ENCODE measurements at regions of chr5 and their contacts with region 1.

Region 1: GRCh38 chr5:136769900-136770684 is 404.7 kb upstream of the TRPC7 start:
- DNase-seq: peak; percentile 50
- ATAC-seq: peak; percentile 97
- H3K4me3 ChIP-seq: no peak overlapping the region
- H3K27ac ChIP-seq: no peak overlapping the region
- H3K4me1 ChIP-seq: no peaks in the 10 kb centered on the region
- H3K27me3 ChIP-seq: no peaks in the 10 kb centered on the region
- CTCF ChIP-seq: peak; percentile 79
- POLR2A ChIP-seq: no peak
- RAD21 ChIP-seq: peak; percentile 92

Region 2: GRCh38 chr5:136364307-136364706 is 405.8 kb before region 1 on chr5:
- CTCF ChIA-PET with region 1: interaction called, 5 read pairs
- POLR2A ChIA-PET with region 1: no interaction called
- dilution Hi-C with region 1: no loop called
- in situ Hi-C with region 1: no loop called
- intact Hi-C with region 1: loop called (anchors 1 kb)
- DNase-seq: no peak
- ATAC-seq: no peak
- H3K4me3 ChIP-seq: no peak overlapping the region
- H3K27ac ChIP-seq: no peak overlapping the region
- H3K4me1 ChIP-seq: no peaks in the 10 kb centered on the region
- H3K27me3 ChIP-seq: no peaks in the 10 kb centered on the region
- CTCF ChIP-seq: peak; percentile 29
- POLR2A ChIP-seq: no peak
- RAD21 ChIP-seq: no peak

Region 3: DNA sequence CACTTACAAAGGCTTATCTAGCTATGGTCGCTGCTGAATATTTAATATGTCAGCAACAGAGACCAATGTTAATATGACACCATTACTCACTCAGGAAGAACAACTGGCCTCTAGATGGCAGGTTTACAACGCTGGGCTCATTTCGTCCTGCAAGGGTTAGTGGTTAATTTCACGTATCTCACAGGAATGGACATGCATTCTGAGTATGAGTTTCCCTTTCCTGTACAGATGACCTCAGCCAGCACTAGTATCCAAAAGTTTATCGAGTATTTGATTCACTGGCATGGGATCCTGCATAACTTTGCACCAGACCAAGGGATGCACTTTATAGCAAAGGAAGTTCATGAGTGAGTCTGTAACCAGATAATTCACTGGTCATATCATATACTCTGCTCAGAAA is 396.1 kb before region 1 on chr5:
- CTCF ChIA-PET with region 1: no interaction called
- POLR2A ChIA-PET with region 1: no interaction called
- dilution Hi-C with region 1: no loop called
- in situ Hi-C with region 1: no loop called
- intact Hi-C with region 1: loop called (anchors 1 kb)
- DNase-seq: peak; percentile 12
- ATAC-seq: peak; percentile 32
- H3K4me3 ChIP-seq: no peak overlapping the region
- H3K27ac ChIP-seq: no peak overlapping the region
- H3K4me1 ChIP-seq: no peaks in the 10 kb centered on the region
- H3K27me3 ChIP-seq: no peaks in the 10 kb centered on the region
- CTCF ChIP-seq: peak; percentile 34; the same call in 1 of the 2 replicates
- POLR2A ChIP-seq: no peak
- RAD21 ChIP-seq: peak; percentile 31; the same call in 1 of the 2 replicates

Region 4: GRCh38 chr5:136424835-136425584 is 345.1 kb before region 1 on chr5:
- CTCF ChIA-PET with region 1: no interaction called
- POLR2A ChIA-PET with region 1: no interaction called
- dilution Hi-C with region 1: no loop called
- in situ Hi-C with region 1: no loop called
- intact Hi-C with region 1: loop called (anchors 1 kb)
- DNase-seq: peak; percentile 33
- ATAC-seq: peak; percentile 61; the same call in 1 of the 2 replicates
- H3K4me3 ChIP-seq: no peak overlapping the region
- H3K27ac ChIP-seq: no peak overlapping the region
- H3K4me1 ChIP-seq: no peaks in the 10 kb centered on the region
- H3K27me3 ChIP-seq: no peaks in the 10 kb centered on the region
- CTCF ChIP-seq: peak; percentile 61
- POLR2A ChIP-seq: no peak
- RAD21 ChIP-seq: peak; percentile 58

Region 5: DNA sequence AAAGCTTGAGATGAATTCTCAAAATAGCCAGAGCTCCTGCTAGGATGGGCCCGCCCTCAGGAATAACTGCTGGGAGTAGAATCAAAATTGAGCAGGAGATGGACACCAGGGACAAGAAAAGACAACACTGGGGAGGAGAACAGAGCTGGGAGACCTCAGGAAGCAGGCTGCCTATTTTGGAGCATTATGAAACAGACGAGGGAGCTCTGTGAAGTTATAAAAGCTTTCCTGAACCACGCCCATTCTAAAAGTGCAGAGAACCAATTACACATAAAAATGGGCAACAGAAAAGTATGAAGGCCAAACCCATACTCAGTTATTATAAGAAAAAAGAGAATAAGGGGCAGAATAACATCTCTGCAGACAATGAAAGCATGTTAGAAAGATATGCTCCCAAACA is 190.9 kb before region 1 on chr5:
- CTCF ChIA-PET with region 1: no interaction called
- POLR2A ChIA-PET with region 1: no interaction called
- dilution Hi-C with region 1: no loop called
- in situ Hi-C with region 1: no loop called
- intact Hi-C with region 1: no loop called
- DNase-seq: no peak
- ATAC-seq: no peak
- H3K4me3 ChIP-seq: no peak overlapping the region
- H3K27ac ChIP-seq: no peak overlapping the region
- H3K4me1 ChIP-seq: no peaks in the 10 kb centered on the region
- H3K27me3 ChIP-seq: no peaks in the 10 kb centered on the region
- CTCF ChIP-seq: no peak
- POLR2A ChIP-seq: no peak
- RAD21 ChIP-seq: no peak

Region 6: DNA sequence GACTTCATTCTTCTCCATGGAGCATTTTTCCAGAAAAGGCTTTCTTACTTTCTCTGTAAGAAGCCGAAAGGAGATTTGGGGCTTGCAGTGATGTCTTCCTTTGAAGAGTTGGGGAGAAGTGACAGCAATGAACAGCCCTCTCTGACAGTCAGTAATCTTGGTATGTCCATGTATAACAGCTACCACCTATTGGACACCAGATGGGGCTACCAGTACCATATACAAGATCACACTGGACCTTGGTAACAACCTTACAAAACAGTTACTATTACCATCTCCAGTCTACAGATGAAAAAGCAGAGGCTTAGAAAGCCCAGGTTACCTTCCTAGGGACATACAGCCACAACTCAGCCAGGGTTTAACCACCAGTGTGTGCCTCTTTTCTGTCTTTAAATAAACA is 132.0 kb before region 1 on chr5:
- CTCF ChIA-PET with region 1: no interaction called
- POLR2A ChIA-PET with region 1: no interaction called
- dilution Hi-C with region 1: no loop called
- in situ Hi-C with region 1: no loop called
- intact Hi-C with region 1: loop called (anchors 1 kb)
- DNase-seq: no peak
- ATAC-seq: peak; percentile 42; the same call in 1 of the 2 replicates
- H3K4me3 ChIP-seq: no peak overlapping the region
- H3K27ac ChIP-seq: no peak overlapping the region
- H3K4me1 ChIP-seq: no peaks in the 10 kb centered on the region
- H3K27me3 ChIP-seq: no peaks in the 10 kb centered on the region
- CTCF ChIP-seq: 0 out of 2 replicates have a peak, but pooled peaks have one; percentile 16
- POLR2A ChIP-seq: no peak
- RAD21 ChIP-seq: peak; percentile 29; the same call in 1 of the 2 replicates

Region 7: GRCh38 chr5:136686192-136686872 is 83.8 kb before region 1 on chr5:
- CTCF ChIA-PET with region 1: no interaction called
- POLR2A ChIA-PET with region 1: no interaction called
- dilution Hi-C with region 1: no loop called
- in situ Hi-C with region 1: no loop called
- intact Hi-C with region 1: loop called (anchors 5 kb)
- DNase-seq: peak; percentile 26
- ATAC-seq: peak; percentile 71
- H3K4me3 ChIP-seq: no peak overlapping the region
- H3K27ac ChIP-seq: no peak overlapping the region
- H3K4me1 ChIP-seq: no peaks in the 10 kb centered on the region
- H3K27me3 ChIP-seq: no peaks in the 10 kb centered on the region
- CTCF ChIP-seq: peak; percentile 47
- POLR2A ChIP-seq: no peak
- RAD21 ChIP-seq: peak; percentile 49